PC-3 (cell line): ENCODE measurements at regions of chr3 and their contacts with region 1.

Region 1: GRCh38 chr3:5426094-5426883 is 238.8 kb downstream of the EDEM1 start:
- DNase-seq: peak; percentile 92
- ATAC-seq: peak; percentile 99
- H3K4me3 ChIP-seq: no peak overlapping the region
- H3K27ac ChIP-seq: no peak overlapping the region
- H3K4me1 ChIP-seq: no peaks in the 10 kb centered on the region
- H3K27me3 ChIP-seq: no peaks in the 10 kb centered on the region
- CTCF ChIP-seq: peak; percentile 95

Region 2: DNA sequence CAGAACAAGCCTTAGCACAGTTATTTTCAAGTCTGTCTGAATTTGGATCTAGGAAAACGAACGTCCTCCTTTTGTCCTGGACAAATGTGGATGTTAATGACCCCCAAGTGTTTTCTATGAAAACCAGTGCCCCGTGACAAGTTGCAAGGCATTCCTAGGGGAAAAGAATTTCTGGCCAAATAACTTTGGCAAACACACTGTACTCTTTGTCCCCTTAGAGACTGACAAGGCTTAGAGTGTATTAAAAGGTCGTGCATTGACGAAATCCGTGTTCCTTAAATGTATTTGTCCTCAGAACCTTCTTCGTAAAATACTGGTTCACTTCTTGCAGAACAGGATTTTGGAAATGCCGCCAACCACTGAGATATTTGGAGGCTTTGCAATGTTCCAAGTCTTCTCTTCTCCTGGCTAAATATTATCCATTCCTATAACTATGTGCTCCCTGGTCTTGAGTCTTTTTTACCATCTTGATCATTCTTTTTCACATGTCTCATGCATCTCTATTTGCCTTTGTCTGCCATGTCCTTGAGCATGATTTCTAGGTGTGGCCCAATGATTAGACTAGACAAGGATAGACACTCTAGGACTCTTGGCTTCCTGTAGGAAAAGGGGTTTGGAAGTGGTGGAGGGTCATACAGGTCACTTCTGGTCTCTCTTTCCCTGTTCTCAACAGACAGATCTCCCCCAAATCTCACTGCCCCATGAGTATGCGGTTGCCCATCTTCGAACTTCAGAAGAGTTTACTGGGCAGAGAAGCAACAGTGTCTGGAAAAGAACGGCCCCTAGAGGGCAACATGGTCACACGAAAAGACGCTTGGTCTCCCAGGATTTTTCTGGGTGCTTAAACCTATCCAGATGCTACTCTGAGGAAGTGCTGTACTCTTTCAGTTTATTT is 121.3 kb before region 1 on chr3:
- CTCF ChIA-PET with region 1: no interaction called
- POLR2A ChIA-PET with region 1: no interaction called
- intact Hi-C with region 1: loop called (anchors 10 kb)
- DNase-seq: peak; percentile 84
- ATAC-seq: peak; percentile 85
- H3K4me3 ChIP-seq: no peak overlapping the region
- H3K27ac ChIP-seq: no peak overlapping the region
- H3K4me1 ChIP-seq: peaks cover 12% of the 10 kb centered on the region; the same call in 1 of the 2 replicates
- H3K27me3 ChIP-seq: no peaks in the 10 kb centered on the region
- CTCF ChIP-seq: peak; percentile 94

Region 3: GRCh38 chr3:5401002-5401401 is 25.3 kb before region 1 on chr3:
- CTCF ChIA-PET with region 1: no interaction called
- POLR2A ChIA-PET with region 1: no interaction called
- intact Hi-C with region 1: no loop called
- DNase-seq: no peak
- ATAC-seq: no peak
- H3K4me3 ChIP-seq: no peak overlapping the region
- H3K27ac ChIP-seq: no peak overlapping the region
- H3K4me1 ChIP-seq: no peaks in the 10 kb centered on the region
- H3K27me3 ChIP-seq: no peaks in the 10 kb centered on the region
- CTCF ChIP-seq: no peak

Region 4: GRCh38 chr3:5479229-5479799 is 53.0 kb after region 1 on chr3:
- CTCF ChIA-PET with region 1: no interaction called
- POLR2A ChIA-PET with region 1: no interaction called
- intact Hi-C with region 1: no loop called
- DNase-seq: peak; percentile 63
- ATAC-seq: no peak
- H3K4me3 ChIP-seq: no peak overlapping the region
- H3K27ac ChIP-seq: no peak overlapping the region
- H3K4me1 ChIP-seq: no peaks in the 10 kb centered on the region
- H3K27me3 ChIP-seq: no peaks in the 10 kb centered on the region
- CTCF ChIP-seq: no peak